ENCODE measurements at regions of chr17 and their contacts with region 1.

Region 1: DNA sequence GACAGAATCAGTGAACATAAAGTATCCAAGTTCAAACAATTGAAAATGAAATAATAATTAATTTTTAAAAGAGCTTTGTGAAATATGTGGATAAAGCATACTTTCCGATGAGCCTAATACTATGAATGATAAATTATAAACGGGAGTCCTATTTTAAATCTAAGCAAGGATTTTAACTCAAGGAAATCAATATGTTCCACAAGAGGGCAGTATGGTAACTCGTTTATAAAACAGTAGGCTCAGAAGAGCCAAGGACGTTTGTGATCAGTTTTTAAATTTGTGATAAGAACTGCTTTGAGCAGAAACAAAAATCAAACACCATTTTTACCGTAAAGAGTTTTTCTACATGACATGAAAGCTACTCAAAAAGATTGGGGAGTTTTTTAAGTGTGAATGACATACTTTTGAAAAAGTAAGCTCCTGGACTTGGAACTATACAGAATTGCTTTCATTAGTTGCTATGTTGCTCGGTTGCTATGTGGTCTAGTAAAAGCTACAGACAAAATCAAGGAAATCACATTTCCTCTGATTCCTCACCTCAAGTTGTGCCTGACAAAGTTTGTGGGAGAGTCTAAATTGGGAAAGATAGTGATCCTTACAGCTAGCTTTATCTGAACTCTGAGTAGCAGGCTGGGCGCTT is 11.8 kb upstream of the TEKT1 start:
- DNase-seq: peak; percentile 67
- ATAC-seq: no peak
- H3K4me3 ChIP-seq: no peak overlapping the region
- H3K4me3 Mint-ChIP-seq: no peak overlapping the region
- H3K27ac ChIP-seq: no peak overlapping the region
- H3K27ac Mint-ChIP-seq: no peak overlapping the region
- H3K4me1 ChIP-seq: no peaks in the 10 kb centered on the region
- H3K4me1 Mint-ChIP-seq: no peaks in the 10 kb centered on the region
- H3K27me3 ChIP-seq: peaks cover 0 to 14% (median 8%) of the 10 kb centered on the region in 4 experiments
- H3K27me3 Mint-ChIP-seq: peaks cover 58% of the 10 kb centered on the region
- CTCF ChIP-seq: peak; percentile 81

Region 2: DNA sequence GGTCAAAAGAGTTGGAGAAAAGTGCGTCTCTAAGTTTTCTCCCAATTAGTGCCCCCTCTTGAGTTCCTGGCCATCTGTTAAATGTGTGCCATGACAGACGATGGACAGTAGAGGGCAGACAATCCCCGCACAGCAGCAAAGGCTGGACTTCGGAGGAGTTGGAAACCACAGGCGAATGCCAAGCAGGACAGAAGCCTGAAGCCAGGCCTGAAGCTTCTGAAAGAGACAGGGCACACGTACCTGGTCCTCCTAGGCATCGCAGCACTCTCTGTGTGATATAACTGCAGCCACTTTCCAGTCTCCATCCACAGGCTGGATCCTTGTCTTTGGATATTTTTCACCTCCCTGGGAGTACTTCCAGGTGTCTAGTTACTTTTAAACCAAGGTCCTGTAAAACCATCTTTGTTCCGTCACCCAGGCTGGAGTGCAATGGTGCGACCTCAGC is 177.3 kb before region 1 on chr17:
- CTCF ChIA-PET with region 1: interaction called, 15 read pairs
- POLR2A ChIA-PET with region 1: no interaction called
- intact Hi-C with region 1: loop called (anchors 1 kb)
- DNase-seq: peak; percentile 70
- ATAC-seq: peak; percentile 89
- H3K4me3 ChIP-seq: no peak overlapping the region
- H3K4me3 Mint-ChIP-seq: no peak overlapping the region
- H3K27ac ChIP-seq: no peak overlapping the region
- H3K27ac Mint-ChIP-seq: no peak overlapping the region
- H3K4me1 ChIP-seq: peaks cover 17 to 30% of the 10 kb centered on the region in 2 donors
- H3K4me1 Mint-ChIP-seq: peaks cover 37% of the 10 kb centered on the region
- H3K27me3 ChIP-seq: no peaks in the 10 kb centered on the region
- H3K27me3 Mint-ChIP-seq: no peaks in the 10 kb centered on the region
- CTCF ChIP-seq: peak; percentile 84

Region 3: DNA sequence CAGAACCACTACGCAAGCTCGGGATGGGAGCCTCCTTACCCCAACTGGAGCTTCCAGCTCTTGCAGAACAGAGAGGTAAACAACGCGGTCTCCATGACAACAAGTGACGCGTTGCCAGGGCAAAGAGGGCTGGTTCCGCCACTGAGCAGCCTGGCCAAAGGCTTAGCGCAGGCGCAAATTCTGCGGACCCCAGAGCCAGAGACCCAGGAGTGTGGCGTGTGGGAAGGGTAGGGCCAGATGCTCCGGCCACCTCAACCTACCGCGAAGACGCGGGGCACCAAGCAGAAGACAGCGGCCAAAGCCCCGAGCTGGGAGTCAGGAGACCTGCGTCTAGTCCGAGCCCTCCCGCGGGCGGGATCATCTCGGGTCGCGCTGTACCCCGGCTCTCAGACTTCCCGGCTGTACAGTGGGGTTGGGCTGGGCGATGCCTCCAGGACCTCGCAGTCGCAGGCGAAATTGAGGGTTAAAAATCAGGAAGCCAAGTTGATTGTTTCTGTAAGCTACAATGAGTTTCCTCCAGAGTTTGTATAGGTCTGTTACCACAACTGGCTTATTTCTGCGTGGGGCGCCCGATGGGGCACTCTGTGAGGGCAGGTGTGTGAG is 11.6 kb before region 1 on chr17 and contains the start of gene TEKT1:
- CTCF ChIA-PET with region 1: interaction called, 35 read pairs
- POLR2A ChIA-PET with region 1: no interaction called
- intact Hi-C with region 1: no loop called
- DNase-seq: peak; percentile 91
- ATAC-seq: peak; percentile 86
- H3K4me3 ChIP-seq: peak within 1 kb of the TSS in 4 of 5 experiments; percentile 21 to 58 (median 46)
- H3K4me3 Mint-ChIP-seq: peak within 1 kb of the TSS; percentile 90
- H3K27ac ChIP-seq: no peak within 1 kb of the TSS
- H3K27ac Mint-ChIP-seq: peak within 1 kb of the TSS; percentile 32
- H3K4me1 ChIP-seq: peaks cover 14 to 16% of the 10 kb centered on the region in 2 donors
- H3K4me1 Mint-ChIP-seq: peaks cover 19% of the 10 kb centered on the region
- H3K27me3 ChIP-seq: peaks cover 0 to 44% (median 38%) of the 10 kb centered on the region in 4 experiments
- H3K27me3 Mint-ChIP-seq: peaks cover 55% of the 10 kb centered on the region
- CTCF ChIP-seq: no peak
- total RNA-seq, gene TEKT1: not detected in 2 replicates

Region 4: GRCh38 chr17:6995431-6996255 is 152.3 kb after region 1 on chr17 and contains the start of gene ALOX12:
- CTCF ChIA-PET with region 1: no interaction called
- POLR2A ChIA-PET with region 1: interaction called, 10 read pairs
- intact Hi-C with region 1: no loop called
- DNase-seq: no peak
- ATAC-seq: no peak
- H3K4me3 ChIP-seq: no peak within 1 kb of the TSS
- H3K4me3 Mint-ChIP-seq: no peak within 1 kb of the TSS
- H3K27ac ChIP-seq: no peak within 1 kb of the TSS
- H3K27ac Mint-ChIP-seq: no peak within 1 kb of the TSS
- H3K4me1 ChIP-seq: no peaks in the 10 kb centered on the region
- H3K4me1 Mint-ChIP-seq: peaks cover 7% of the 10 kb centered on the region
- H3K27me3 ChIP-seq: no peaks in the 10 kb centered on the region
- H3K27me3 Mint-ChIP-seq: no peaks in the 10 kb centered on the region
- CTCF ChIP-seq: no peak
- total RNA-seq, gene ALOX12: not detected in 2 replicates

Region 5: DNA sequence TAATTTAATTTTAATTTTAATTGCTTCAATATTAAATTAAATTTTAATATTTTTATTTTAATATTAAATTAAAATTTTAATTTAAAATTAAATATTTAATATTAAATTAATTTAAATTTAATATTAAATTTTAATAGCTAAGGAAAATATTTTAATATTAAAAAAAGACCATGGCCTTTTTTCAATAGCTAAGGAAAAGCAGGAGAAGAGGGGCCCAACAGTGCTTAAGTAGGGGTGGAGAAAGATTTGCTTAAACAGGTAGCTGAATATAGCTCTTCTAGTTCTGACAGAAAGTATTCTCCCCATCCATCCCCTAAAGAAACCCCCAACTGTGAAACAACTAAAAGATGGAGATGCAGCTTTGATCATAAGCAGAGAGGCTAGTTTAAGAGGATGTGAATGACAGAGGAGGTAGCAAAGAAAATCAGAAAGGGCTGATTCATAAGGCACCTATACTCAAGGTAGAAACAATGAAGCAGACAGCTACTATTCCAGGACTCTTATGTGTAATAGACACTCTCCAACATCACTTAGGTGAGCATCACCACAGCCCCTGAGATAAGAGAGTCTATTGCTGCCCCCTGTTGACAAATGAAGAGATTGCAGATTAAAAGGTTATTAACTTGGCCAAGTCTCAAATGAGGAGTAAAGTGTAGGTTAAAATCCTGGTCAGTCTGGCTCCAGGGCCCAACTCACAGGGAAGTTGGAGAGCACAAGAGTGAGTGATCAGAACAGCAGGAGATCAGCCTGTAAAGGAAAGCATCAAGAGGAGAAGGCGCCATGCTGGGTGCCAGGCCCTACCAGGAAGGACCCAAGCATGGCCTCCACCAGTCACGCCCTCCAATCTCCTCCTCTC is 161.3 kb after region 1 on chr17:
- CTCF ChIA-PET with region 1: interaction called, 36 read pairs
- POLR2A ChIA-PET with region 1: no interaction called
- intact Hi-C with region 1: loop called (anchors 2 kb)
- DNase-seq: peak; percentile 83
- ATAC-seq: peak; percentile 93
- H3K4me3 ChIP-seq: no peak overlapping the region
- H3K4me3 Mint-ChIP-seq: no peak overlapping the region
- H3K27ac ChIP-seq: no peak overlapping the region
- H3K27ac Mint-ChIP-seq: peak overlapping the region; percentile 12
- H3K4me1 ChIP-seq: peaks cover 0 to 6% of the 10 kb centered on the region in 2 donors
- H3K4me1 Mint-ChIP-seq: peaks cover 24% of the 10 kb centered on the region
- H3K27me3 ChIP-seq: no peaks in the 10 kb centered on the region
- H3K27me3 Mint-ChIP-seq: no peaks in the 10 kb centered on the region
- CTCF ChIP-seq: peak; percentile 87

Region 6: GRCh38 chr17:7021993-7022778 is 178.8 kb after region 1 on chr17:
- CTCF ChIA-PET with region 1: interaction called, 23 read pairs
- POLR2A ChIA-PET with region 1: no interaction called
- intact Hi-C with region 1: no loop called
- DNase-seq: peak; percentile 92
- ATAC-seq: peak; percentile 82
- H3K4me3 ChIP-seq: peak overlapping the region in 4 of 5 experiments; percentile 44 to 71 (median 62)
- H3K4me3 Mint-ChIP-seq: peak overlapping the region; percentile 82
- H3K27ac ChIP-seq: peak overlapping the region; percentile 73 to 80
- H3K27ac Mint-ChIP-seq: peak overlapping the region; percentile 92
- H3K4me1 ChIP-seq: peaks cover 21 to 27% of the 10 kb centered on the region in 2 donors
- H3K4me1 Mint-ChIP-seq: peaks cover 28% of the 10 kb centered on the region
- H3K27me3 ChIP-seq: no peaks in the 10 kb centered on the region
- H3K27me3 Mint-ChIP-seq: no peaks in the 10 kb centered on the region
- CTCF ChIP-seq: peak; percentile 98